ENCODE measurements at regions of chr2 and their contacts with region 1.

Region 1: GRCh38 chr2:46029332-46029811 is 267.8 kb upstream of the EPAS1 start:
- DNase-seq: no peak
- H3K4me3 ChIP-seq: no peak overlapping the region
- H3K27ac ChIP-seq: no peak overlapping the region
- H3K4me1 ChIP-seq: no peaks in the 10 kb centered on the region; a peak in 1 of 7 replicates
- H3K27me3 ChIP-seq: no peaks in the 10 kb centered on the region
- CTCF ChIP-seq: peak in 2 of 3 experiments; percentile 5 to 21; a peak in 2 of 4 replicates
- EP300 ChIP-seq: no peak
- POLR2A ChIP-seq: no peak
- RAD21 ChIP-seq: no peak

Region 2: DNA sequence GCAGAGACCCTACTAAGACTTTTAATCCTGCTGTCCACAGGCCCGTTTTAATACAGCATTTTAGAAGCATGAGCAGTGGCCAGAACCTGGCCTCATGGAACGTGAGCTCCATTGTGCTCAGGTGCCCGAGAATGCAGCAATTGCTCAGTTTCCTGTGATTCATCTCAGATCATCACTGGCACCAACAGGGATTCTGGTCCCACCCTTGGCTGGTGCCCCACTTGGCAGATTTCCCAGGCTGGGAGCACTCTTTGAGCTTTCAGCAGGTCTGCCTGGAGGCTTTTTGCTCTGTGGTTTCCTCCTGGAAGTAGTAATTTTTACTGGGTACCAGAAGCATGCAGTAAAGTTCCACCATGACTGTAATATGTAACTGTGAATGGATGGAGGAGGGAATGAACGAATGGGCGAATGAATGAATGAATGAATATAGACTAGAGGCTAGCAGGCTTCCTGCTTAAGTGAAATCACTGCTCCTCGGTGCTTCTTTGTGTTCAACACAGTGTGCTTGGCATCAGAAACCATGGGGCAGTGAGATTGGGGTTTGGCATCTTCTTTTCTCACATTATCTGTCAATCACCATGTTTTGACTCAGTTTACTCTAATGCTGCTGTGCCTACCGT is 65.0 kb before region 1 on chr2:
- CTCF ChIA-PET with region 1: no interaction called
- POLR2A ChIA-PET with region 1: no interaction called
- DNase-seq: no peak
- H3K4me3 ChIP-seq: no peak overlapping the region
- H3K27ac ChIP-seq: no peak overlapping the region
- H3K4me1 ChIP-seq: no peaks in the 10 kb centered on the region; a peak in 4 of 7 replicates
- H3K27me3 ChIP-seq: no peaks in the 10 kb centered on the region
- CTCF ChIP-seq: no peak
- EP300 ChIP-seq: no peak
- POLR2A ChIP-seq: no peak
- RAD21 ChIP-seq: no peak

Region 3: DNA sequence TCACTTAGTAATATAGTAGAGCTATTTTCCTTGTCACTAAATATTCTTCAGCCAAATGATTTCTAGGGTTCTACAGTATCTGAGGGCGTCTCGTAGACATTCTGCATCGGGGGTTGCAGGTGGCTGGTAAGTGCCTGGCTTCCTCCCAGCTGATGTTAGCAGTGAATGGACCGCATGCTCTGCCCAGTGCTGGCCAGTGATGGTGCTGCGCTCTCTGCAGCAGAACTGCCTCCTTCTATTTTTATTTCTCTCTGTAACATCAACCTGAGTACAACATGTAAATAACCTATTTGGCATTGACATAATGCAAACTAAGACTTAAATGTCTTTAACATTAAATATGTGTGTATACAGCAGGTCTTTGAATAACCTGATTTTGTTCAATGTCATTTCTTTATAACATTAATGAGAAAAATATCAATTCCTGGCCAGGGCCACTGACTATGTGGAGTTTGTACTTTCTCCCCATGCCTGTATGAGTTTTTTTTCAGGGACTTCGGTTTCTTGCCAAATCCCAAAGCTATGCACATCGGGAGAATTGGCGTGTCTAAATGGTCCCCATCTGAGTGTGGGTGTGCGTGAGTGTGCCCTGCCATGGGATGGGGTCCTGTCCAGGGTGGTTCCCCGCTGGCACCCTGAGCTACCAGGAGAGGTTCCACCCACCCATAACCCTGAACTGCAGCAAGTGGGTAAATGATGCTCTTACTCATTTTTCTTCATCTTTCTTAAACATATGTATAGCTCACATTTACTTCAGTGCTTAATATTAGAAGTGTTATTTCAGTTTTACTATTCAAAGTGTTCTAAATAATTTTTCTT is 10.4 kb before region 1 on chr2:
- CTCF ChIA-PET with region 1: interaction called, 12 read pairs
- POLR2A ChIA-PET with region 1: interaction called, 3 read pairs
- DNase-seq: no peak
- H3K4me3 ChIP-seq: no peak overlapping the region
- H3K27ac ChIP-seq: no peak overlapping the region
- H3K4me1 ChIP-seq: peaks cover 6 to 14% (median 9%) of the 10 kb centered on the region in 4 experiments; a peak in 6 of 7 replicates
- H3K27me3 ChIP-seq: no peaks in the 10 kb centered on the region
- CTCF ChIP-seq: peak in 2 of 3 experiments; percentile 23 to 36; a peak in 2 of 4 replicates
- EP300 ChIP-seq: no peak
- POLR2A ChIP-seq: no peak
- RAD21 ChIP-seq: 0 out of 4 replicates have a peak, but pooled peaks of 1 of the 2 experiments have one; percentile 5

Region 4: GRCh38 chr2:46073540-46074018 is 44.2 kb after region 1 on chr2:
- CTCF ChIA-PET with region 1: no interaction called
- POLR2A ChIA-PET with region 1: no interaction called
- DNase-seq: no peak
- H3K4me3 ChIP-seq: no peak overlapping the region
- H3K27ac ChIP-seq: no peak overlapping the region
- H3K4me1 ChIP-seq: peaks cover 0 to 3% (median 0%) of the 10 kb centered on the region in 4 experiments; a peak in 2 of 7 replicates
- H3K27me3 ChIP-seq: no peaks in the 10 kb centered on the region; a peak in 1 of 7 replicates
- CTCF ChIP-seq: no peak
- EP300 ChIP-seq: no peak
- POLR2A ChIP-seq: no peak
- RAD21 ChIP-seq: no peak

Region 5: DNA sequence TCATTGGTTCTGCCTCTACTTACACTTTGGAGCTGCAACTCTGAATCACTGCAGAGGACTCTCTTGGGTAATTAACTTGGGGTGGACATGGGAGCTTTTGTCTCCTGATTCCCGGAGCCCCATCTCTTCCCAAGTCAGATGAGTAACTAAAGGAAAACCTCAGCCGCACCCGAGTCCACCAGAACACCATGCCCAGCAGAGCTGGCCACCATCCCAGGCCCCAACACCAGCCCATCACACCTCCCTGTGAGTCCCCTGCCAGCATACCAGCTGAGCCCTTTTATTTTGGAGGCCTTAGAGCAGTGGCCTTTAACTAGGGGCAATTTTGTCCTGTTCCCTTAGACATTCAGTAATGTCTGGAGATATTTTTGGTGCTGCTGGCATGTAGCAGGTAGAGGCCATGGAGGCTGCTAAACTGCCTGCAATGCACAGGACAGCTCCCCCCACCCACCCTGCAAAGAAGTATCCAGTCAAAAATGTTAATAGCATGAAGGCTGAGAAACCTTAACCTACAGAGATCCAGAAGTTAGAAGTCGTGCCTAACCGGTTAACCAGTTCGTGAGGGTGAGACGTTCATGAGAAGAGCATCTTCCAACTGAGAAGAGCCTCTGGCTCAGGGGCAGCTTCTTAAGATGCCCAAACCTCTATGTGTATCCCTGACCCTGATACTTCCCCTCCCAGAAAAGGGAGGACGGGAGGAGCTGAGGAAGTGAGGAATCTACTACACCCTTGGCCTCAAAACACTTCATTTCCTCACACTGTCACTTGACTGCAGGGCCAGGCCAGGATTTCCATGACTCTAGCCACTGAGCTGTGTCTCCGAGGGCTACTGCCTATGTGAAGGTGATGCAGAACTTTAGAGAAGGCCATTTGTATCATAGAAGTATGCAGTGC is 127.9 kb after region 1 on chr2:
- CTCF ChIA-PET with region 1: no interaction called
- POLR2A ChIA-PET with region 1: no interaction called
- DNase-seq: no peak
- H3K4me3 ChIP-seq: no peak overlapping the region
- H3K27ac ChIP-seq: no peak overlapping the region
- H3K4me1 ChIP-seq: 0 out of 7 replicates have a peak, but pooled peaks cover 0 to 2% (median 0%) of the 10 kb centered on the region in 4 experiments
- H3K27me3 ChIP-seq: no peaks in the 10 kb centered on the region; a peak in 2 of 7 replicates
- CTCF ChIP-seq: no peak
- EP300 ChIP-seq: no peak
- POLR2A ChIP-seq: no peak
- RAD21 ChIP-seq: no peak

Region 6: GRCh38 chr2:46446871-46447568 is 417.6 kb after region 1 on chr2:
- CTCF ChIA-PET with region 1: no interaction called
- POLR2A ChIA-PET with region 1: no interaction called
- DNase-seq: no peak
- H3K4me3 ChIP-seq: no peak overlapping the region
- H3K27ac ChIP-seq: no peak overlapping the region
- H3K4me1 ChIP-seq: no peaks in the 10 kb centered on the region
- H3K27me3 ChIP-seq: no peaks in the 10 kb centered on the region
- CTCF ChIP-seq: no peak
- EP300 ChIP-seq: no peak
- POLR2A ChIP-seq: no peak
- RAD21 ChIP-seq: no peak

Measured in H1 (cell line).